ENCODE measurements at regions of chr6 and their contacts with region 1.

Region 1: GRCh38 chr6:34392497-34393190 is at the start of gene NUDT3:
- DNase-seq: peak; percentile 96
- ATAC-seq: peak; percentile 87
- H3K4me3 Mint-ChIP-seq: no peak within 1 kb of the TSS
- H3K27ac Mint-ChIP-seq: peak within 1 kb of the TSS; percentile 95
- H3K4me1 Mint-ChIP-seq: peaks cover 26% of the 10 kb centered on the region
- H3K27me3 Mint-ChIP-seq: no peaks in the 10 kb centered on the region
- CTCF ChIP-seq: no peak
- total RNA-seq, gene NUDT3: 24.1 and 27.0 TPM in 2 replicates

Region 2: DNA sequence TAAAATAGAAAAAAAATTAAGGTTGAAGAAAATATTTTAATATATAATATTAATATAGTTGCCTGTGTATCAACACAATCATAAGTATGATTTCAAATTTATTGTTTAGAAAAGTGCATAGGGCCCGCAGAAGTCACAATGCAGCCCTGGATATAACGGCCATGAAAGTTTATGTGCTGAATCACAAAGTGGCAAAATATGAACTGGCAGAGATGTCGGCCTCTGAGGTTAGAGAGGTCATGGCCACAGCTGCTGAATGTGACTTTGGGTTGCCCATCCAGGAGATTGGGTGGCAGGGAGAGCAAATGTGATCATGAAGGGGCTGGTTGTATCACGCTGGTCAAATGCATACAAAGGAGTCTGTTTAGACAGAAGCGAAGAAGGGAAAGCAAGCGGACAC is 1236.1 kb before region 1 on chr6:
- CTCF ChIA-PET with region 1: no interaction called
- POLR2A ChIA-PET with region 1: no interaction called
- intact Hi-C with region 1: no loop called
- DNase-seq: no peak
- ATAC-seq: no peak
- H3K4me3 Mint-ChIP-seq: no peak overlapping the region
- H3K27ac Mint-ChIP-seq: no peak overlapping the region
- H3K4me1 Mint-ChIP-seq: peaks cover 7% of the 10 kb centered on the region
- H3K27me3 Mint-ChIP-seq: peaks cover 6% of the 10 kb centered on the region
- CTCF ChIP-seq: no peak

Region 3: GRCh38 chr6:34161857-34162515 is 230.7 kb before region 1 on chr6:
- CTCF ChIA-PET with region 1: no interaction called
- POLR2A ChIA-PET with region 1: no interaction called
- intact Hi-C with region 1: loop called (anchors 1 kb)
- DNase-seq: peak; percentile 7
- ATAC-seq: no peak
- H3K4me3 Mint-ChIP-seq: no peak overlapping the region
- H3K27ac Mint-ChIP-seq: no peak overlapping the region
- H3K4me1 Mint-ChIP-seq: peaks cover 3% of the 10 kb centered on the region
- H3K27me3 Mint-ChIP-seq: no peaks in the 10 kb centered on the region
- CTCF ChIP-seq: no peak

Region 4: GRCh38 chr6:34236131-34236996 is 156.3 kb before region 1 on chr6 and contains the start of gene HMGA1:
- CTCF ChIA-PET with region 1: no interaction called
- POLR2A ChIA-PET with region 1: interaction called, 9 read pairs
- intact Hi-C with region 1: loop called (anchors 1 kb)
- DNase-seq: peak; percentile 90
- ATAC-seq: peak; percentile 77
- H3K4me3 Mint-ChIP-seq: peak within 1 kb of the TSS; percentile 89
- H3K27ac Mint-ChIP-seq: peak within 1 kb of the TSS; percentile 95
- H3K4me1 Mint-ChIP-seq: peaks cover 36% of the 10 kb centered on the region
- H3K27me3 Mint-ChIP-seq: no peaks in the 10 kb centered on the region
- CTCF ChIP-seq: no peak
- total RNA-seq, gene HMGA1: 186 and 188 TPM in 2 replicates

Region 5: GRCh38 chr6:34315780-34316179 is 76.9 kb before region 1 on chr6:
- CTCF ChIA-PET with region 1: no interaction called
- POLR2A ChIA-PET with region 1: interaction called, 6 read pairs
- intact Hi-C with region 1: loop called (anchors 1 kb)
- DNase-seq: no peak
- ATAC-seq: peak; percentile 79
- H3K4me3 Mint-ChIP-seq: peak overlapping the region; percentile 77
- H3K27ac Mint-ChIP-seq: peak overlapping the region; percentile 94
- H3K4me1 Mint-ChIP-seq: peaks cover 69% of the 10 kb centered on the region
- H3K27me3 Mint-ChIP-seq: no peaks in the 10 kb centered on the region
- CTCF ChIP-seq: no peak

Region 6: DNA sequence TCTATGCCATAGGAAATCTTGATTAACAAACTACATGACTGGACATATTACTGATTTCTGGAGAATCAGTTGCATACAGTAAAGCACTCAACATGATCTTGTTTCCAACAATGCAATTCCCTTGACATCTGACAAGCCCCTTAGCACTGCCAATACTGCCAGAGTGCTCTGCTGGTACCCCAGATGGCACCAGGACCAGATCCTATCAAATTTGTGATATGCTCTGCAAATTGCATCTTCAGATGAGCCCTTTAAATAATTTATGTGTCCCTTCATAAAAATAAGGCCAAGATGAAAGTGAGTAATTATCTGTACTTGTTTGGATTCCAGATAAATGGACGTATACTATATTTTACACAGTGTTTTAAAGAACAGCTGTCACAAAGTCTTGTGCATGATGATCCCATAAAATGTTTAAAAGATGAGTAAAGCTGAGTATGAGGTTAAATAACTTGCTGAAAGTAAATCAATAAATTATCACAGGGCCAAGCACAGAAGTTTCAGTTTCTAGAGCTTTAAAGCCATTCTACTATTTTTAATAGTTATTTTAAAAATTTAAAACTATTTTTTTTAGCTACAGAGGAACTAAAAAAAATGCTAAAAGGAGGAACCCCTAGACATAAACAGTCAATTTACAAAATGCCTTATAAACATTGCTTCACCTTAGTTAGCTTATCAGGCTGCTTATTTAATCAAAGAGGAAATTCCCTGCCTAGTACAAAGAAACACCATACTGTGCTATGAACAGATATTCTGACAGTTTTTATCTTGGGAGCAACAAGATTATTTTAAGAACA is 42.3 kb before region 1 on chr6:
- CTCF ChIA-PET with region 1: no interaction called
- POLR2A ChIA-PET with region 1: no interaction called
- intact Hi-C with region 1: loop called (anchors 2 kb)
- DNase-seq: no peak
- ATAC-seq: no peak
- H3K4me3 Mint-ChIP-seq: no peak overlapping the region
- H3K27ac Mint-ChIP-seq: no peak overlapping the region
- H3K4me1 Mint-ChIP-seq: peaks cover 48% of the 10 kb centered on the region
- H3K27me3 Mint-ChIP-seq: no peaks in the 10 kb centered on the region
- CTCF ChIP-seq: no peak

Region 7: GRCh38 chr6:34414999-34415858 is 22.6 kb after region 1 on chr6:
- CTCF ChIA-PET with region 1: interaction called, 19 read pairs
- POLR2A ChIA-PET with region 1: interaction called, 8 read pairs
- intact Hi-C with region 1: loop called (anchors 1 kb)
- DNase-seq: no peak
- ATAC-seq: peak; percentile 83
- H3K4me3 Mint-ChIP-seq: no peak overlapping the region
- H3K27ac Mint-ChIP-seq: no peak overlapping the region
- H3K4me1 Mint-ChIP-seq: peaks cover 6% of the 10 kb centered on the region
- H3K27me3 Mint-ChIP-seq: no peaks in the 10 kb centered on the region
- CTCF ChIP-seq: no peak

Region 8: DNA sequence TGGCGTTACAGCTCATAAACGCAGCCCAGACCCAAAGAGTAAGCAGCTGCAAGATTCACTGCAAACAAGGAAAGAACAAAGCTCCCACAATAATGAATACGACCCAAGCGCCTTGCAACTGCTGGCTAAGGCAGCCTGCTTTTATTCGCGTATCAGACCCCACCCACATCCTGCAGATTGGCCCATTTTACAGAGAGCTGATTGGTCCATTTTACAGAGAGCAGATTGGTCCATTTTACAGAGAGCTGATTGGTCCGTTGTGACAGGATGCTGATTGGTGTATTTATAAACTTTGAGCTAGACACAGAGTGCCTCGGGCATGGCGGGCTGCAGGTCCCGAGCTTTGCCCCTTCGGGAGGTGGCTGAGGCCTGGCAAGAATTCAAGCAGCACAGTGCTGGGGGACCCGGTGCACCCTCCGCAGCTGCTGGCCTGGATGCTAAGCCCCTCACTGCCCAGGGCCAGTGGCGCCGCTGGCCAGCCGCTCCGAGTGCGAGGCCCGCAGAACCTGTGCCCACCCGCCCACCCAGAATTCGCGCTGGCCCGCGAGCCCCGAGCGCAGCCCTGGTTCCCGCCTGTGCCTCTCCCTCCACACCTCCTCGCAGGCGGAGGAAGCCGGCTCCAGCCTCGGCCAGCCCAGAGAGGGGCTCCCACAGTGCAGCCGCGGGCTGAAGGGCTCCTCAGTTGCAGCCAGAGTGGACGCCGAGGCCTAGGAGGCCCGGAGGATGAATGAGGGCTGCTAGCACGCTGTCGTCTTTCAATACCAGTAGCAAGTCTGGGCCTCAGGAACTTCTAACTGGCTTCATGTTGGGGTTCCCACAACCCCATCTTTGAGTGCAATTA is 44.4 kb after region 1 on chr6:
- CTCF ChIA-PET with region 1: no interaction called
- POLR2A ChIA-PET with region 1: no interaction called
- intact Hi-C with region 1: no loop called
- DNase-seq: no peak
- ATAC-seq: no peak
- H3K4me3 Mint-ChIP-seq: no peak overlapping the region
- H3K27ac Mint-ChIP-seq: no peak overlapping the region
- H3K4me1 Mint-ChIP-seq: peaks cover 5% of the 10 kb centered on the region
- H3K27me3 Mint-ChIP-seq: no peaks in the 10 kb centered on the region
- CTCF ChIP-seq: no peak

Region 9: GRCh38 chr6:34526992-34527728 is 134.5 kb after region 1 on chr6:
- CTCF ChIA-PET with region 1: no interaction called
- POLR2A ChIA-PET with region 1: no interaction called
- intact Hi-C with region 1: loop called (anchors 1 kb)
- DNase-seq: peak; percentile 92
- ATAC-seq: peak; percentile 98
- H3K4me3 Mint-ChIP-seq: peak overlapping the region; percentile 69
- H3K27ac Mint-ChIP-seq: peak overlapping the region; percentile 66
- H3K4me1 Mint-ChIP-seq: peaks cover 7% of the 10 kb centered on the region
- H3K27me3 Mint-ChIP-seq: no peaks in the 10 kb centered on the region
- CTCF ChIP-seq: no peak

Measured in activated B cell treated with CpG ODN at 0.5 μM for 24 hours (primary cell).